Right lobe of liver (tissue), 6 donors: ENCODE measurements at regions of chr1 and their contacts with region 1.

Region 1: GRCh38 chr1:179706339-179706941 is 36.7 kb upstream of the FAM163A start:
- DNase-seq: peak in 2 of 3 donors; percentile 28 to 48
- ATAC-seq: peak; percentile 61 to 73 (median 64)
- H3K4me3 ChIP-seq: no peak overlapping the region
- H3K27ac ChIP-seq: no peak overlapping the region
- H3K4me1 ChIP-seq: peaks cover 0 to 8% (median 0%) of the 10 kb centered on the region in 4 donors
- H3K27me3 ChIP-seq: no peaks in the 10 kb centered on the region
- CTCF ChIP-seq: peak; percentile 68 to 81 (median 80)
- POLR2A ChIP-seq: no peak

Region 2: DNA sequence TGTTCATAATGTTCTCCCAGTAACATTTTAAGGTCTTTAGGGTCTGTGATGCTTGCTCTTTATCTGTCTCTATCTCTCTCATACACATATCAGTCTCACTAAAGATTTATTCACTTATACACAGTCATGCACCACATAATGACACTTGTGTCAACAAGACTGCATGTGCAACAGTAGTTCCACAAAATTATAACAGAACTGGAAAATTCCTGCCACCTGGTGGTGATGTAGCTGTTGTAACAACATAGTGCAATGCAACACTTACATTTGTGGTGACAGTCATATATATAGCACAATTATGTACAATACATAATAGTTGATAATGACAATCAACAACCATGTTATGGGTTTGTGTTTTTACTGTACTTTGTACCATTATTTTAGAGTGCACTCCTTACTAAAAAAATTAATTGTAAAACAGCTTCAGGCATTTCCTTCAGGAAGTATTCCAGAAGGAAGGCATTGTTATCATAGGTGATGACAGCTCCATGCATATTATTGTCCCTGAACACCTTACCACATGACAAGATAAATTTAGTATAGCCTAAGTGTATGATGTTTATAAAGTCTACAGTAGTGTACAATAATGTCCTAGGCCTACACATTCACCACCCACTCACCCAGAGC is 106.7 kb before region 1 on chr1:
- intact Hi-C with region 1: no loop called
- DNase-seq: no peak
- ATAC-seq: peak; percentile 48 to 86 (median 64)
- H3K4me3 ChIP-seq: no peak overlapping the region
- H3K27ac ChIP-seq: no peak overlapping the region
- H3K4me1 ChIP-seq: no peaks in the 10 kb centered on the region
- H3K27me3 ChIP-seq: peaks cover 0 to 4% of the 10 kb centered on the region in 2 donors
- CTCF ChIP-seq: peak; percentile 39 to 55 (median 43)
- POLR2A ChIP-seq: no peak

Region 3: GRCh38 chr1:179809506-179810366 is 103.3 kb after region 1 on chr1:
- intact Hi-C with region 1: loop called in 1 of 2 experiments (anchors 5 kb)
- DNase-seq: peak in 2 of 3 donors; percentile 48 to 62
- ATAC-seq: peak; percentile 75 to 82 (median 78)
- H3K4me3 ChIP-seq: no peak overlapping the region
- H3K27ac ChIP-seq: no peak overlapping the region
- H3K4me1 ChIP-seq: peaks cover 0 to 4% (median 0%) of the 10 kb centered on the region in 4 donors
- H3K27me3 ChIP-seq: no peaks in the 10 kb centered on the region
- CTCF ChIP-seq: peak; percentile 75 to 93 (median 90)
- POLR2A ChIP-seq: no peak

Region 4: DNA sequence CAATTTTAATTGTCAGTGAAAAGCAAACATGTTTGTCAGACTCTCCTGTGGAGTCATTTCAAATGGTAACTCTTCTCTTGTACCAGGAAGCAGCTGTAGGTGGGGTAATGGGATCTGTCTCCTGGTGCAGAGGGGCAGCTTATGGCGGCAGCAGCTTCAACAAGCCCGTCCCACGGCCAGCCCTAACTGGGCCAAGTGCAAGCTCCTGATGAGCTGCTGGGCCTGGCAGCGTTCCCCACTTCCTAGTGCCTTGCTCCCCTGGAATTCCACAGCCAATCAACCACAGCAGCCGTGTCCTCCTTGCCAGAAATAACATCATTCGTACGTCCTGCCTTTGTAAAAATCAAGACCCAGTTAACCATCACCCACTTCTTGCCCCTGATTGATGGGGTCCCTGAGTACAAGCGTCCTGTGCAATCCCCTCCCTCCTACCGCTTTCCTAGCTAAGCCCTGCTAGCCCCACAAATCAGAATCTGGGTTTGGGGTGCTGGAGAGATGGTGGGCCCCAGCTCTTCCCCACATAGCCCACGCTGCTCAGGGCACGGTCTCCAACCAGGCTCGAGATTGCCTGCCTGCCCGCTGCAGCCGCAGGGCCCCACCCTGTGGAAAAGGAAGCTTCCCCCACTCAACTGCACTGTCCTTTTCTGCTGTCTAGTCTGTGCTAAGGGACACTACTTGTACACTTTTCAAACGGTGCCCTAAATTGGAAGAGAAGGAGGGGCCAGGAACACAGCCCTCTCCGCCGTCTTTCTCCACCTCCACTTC is 109.9 kb after region 1 on chr1:
- intact Hi-C with region 1: loop called (anchors 5 kb)
- DNase-seq: no peak
- ATAC-seq: peak in 1 of 4 donors; percentile 9
- H3K4me3 ChIP-seq: no peak overlapping the region
- H3K27ac ChIP-seq: no peak overlapping the region
- H3K4me1 ChIP-seq: peaks cover 0 to 11% (median 0%) of the 10 kb centered on the region in 4 donors
- H3K27me3 ChIP-seq: no peaks in the 10 kb centered on the region
- CTCF ChIP-seq: no peak
- POLR2A ChIP-seq: no peak